ENCODE measurements at regions of chrX and their contacts with region 1.

Region 1: DNA sequence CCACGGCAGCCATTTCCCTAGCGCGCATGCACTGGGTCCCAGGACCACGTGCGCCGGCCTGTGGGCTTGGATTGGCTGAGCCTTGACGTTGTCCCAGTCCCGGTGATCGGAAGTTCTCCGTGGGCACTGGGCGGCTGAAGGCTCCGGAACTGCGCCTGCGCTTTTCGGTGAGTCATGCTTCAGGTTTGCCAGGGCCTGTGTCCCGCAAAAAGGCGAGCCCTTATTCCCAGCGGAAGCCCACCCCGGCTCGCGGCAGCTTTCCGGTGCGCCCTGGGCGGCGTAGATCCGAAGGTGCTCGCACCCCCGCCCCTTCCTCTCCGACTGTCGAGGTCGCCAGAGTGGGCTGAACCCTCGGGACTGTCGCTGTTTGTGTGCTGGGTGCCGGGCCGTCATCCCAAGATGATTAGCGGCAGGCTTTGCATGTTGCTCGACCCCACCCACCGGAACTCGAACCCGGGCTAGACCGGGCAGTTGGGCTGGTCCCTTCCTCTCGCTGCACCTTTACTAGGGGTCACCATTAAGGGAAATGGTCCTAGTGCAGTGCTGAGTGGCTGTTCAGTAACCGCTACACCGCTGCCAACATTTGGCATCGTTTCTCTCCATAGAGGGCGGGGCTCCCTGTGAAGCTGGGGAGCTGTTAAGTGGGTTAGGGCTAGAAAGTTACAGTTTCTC is at the start of gene TCEANC:
- DNase-seq: peak; percentile 96
- ATAC-seq: peak; percentile 96
- H3K4me3 Mint-ChIP-seq: peak within 1 kb of the TSS; percentile 81
- H3K27ac Mint-ChIP-seq: peak within 1 kb of the TSS; percentile 90
- H3K4me1 Mint-ChIP-seq: peaks cover 12% of the 10 kb centered on the region
- H3K27me3 Mint-ChIP-seq: no peaks in the 10 kb centered on the region
- total RNA-seq, gene TCEANC: 1.9 to 2.3 TPM

Region 2: DNA sequence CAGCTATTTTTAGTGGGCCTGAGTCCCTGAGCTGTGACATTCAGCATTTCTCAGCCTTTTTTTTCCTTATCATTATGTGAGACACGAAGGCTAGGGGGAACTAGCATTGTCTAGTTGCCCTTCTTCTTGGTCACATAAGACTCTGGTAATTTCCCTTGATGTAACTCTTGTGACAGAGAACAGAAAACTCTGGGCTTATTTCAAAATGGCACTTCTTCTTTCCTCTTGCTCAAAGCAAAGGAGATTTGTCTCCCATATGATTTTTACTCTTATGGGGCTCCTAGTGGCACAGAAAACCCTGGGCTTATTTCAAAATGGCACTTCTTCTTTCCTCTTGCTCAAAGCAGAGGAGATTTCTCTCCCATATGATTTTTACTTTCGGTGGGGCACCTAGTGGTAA is 348.1 kb before region 1 on chrX:
- CTCF ChIA-PET with region 1: no interaction called
- POLR2A ChIA-PET with region 1: no interaction called
- intact Hi-C with region 1: no loop called
- DNase-seq: no peak
- ATAC-seq: no peak
- H3K4me3 Mint-ChIP-seq: no peak overlapping the region
- H3K27ac Mint-ChIP-seq: no peak overlapping the region
- H3K4me1 Mint-ChIP-seq: peaks cover 19% of the 10 kb centered on the region
- H3K27me3 Mint-ChIP-seq: no peaks in the 10 kb centered on the region

Region 3: DNA sequence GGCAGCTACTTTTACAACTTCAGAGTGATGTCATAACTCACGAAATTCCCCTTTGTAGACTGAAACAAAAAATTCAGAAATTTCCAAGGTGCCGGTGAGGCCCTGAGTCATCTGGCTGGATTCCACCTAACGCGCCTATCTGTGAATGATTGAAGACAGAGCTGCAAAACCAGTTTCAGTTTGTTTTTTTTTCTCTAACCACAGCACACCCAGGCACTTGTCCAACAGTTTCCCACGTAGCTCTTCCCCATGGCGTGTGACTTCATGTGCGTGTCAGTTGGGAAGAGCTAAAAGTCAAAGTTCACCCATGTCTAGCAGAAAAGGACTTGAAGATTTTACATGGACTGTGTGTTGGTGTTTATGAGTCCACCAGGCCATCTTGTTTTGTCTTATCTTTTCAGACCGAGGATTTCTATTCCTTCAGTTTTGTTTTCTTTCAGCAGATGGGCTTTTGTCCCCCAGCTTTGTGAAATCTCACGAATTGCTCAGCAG is 16.1 kb after region 1 on chrX:
- CTCF ChIA-PET with region 1: no interaction called
- POLR2A ChIA-PET with region 1: interaction called, 4 read pairs
- intact Hi-C with region 1: loop called in 1 of 2 experiments (anchors 1 kb)
- DNase-seq: peak; percentile 76
- ATAC-seq: peak; percentile 93
- H3K4me3 Mint-ChIP-seq: peak overlapping the region; percentile 51
- H3K27ac Mint-ChIP-seq: peak overlapping the region; percentile 93
- H3K4me1 Mint-ChIP-seq: peaks cover 11% of the 10 kb centered on the region
- H3K27me3 Mint-ChIP-seq: no peaks in the 10 kb centered on the region

Region 4: GRCh38 chrX:13688958-13689740 is 36.0 kb after region 1 on chrX and contains the start of gene RAB9A:
- CTCF ChIA-PET with region 1: no interaction called
- POLR2A ChIA-PET with region 1: interaction called, 3 read pairs
- intact Hi-C with region 1: loop called (anchors 1 to 2 kb)
- DNase-seq: peak; percentile 88
- ATAC-seq: peak; percentile 85
- H3K4me3 Mint-ChIP-seq: peak within 1 kb of the TSS; percentile 85
- H3K27ac Mint-ChIP-seq: peak within 1 kb of the TSS; percentile 97
- H3K4me1 Mint-ChIP-seq: peaks cover 63% of the 10 kb centered on the region
- H3K27me3 Mint-ChIP-seq: no peaks in the 10 kb centered on the region
- total RNA-seq, gene RAB9A: 24.9 to 31.4 TPM

Region 5: GRCh38 chrX:13734278-13735172 is 81.4 kb after region 1 on chrX and contains the starts of genes OFD1 and TRAPPC2:
- CTCF ChIA-PET with region 1: no interaction called
- POLR2A ChIA-PET with region 1: no interaction called
- intact Hi-C with region 1: loop called (anchors 1 kb)
- DNase-seq: peak; percentile 93
- ATAC-seq: peak; percentile 95
- H3K4me3 Mint-ChIP-seq: peak within 1 kb of the TSS; percentile 81
- H3K27ac Mint-ChIP-seq: peak within 1 kb of the TSS; percentile 93
- H3K4me1 Mint-ChIP-seq: peaks cover 42% of the 10 kb centered on the region
- H3K27me3 Mint-ChIP-seq: no peaks in the 10 kb centered on the region
- total RNA-seq, gene OFD1: 28.0 to 32.4 TPM
- total RNA-seq, gene TRAPPC2: 10.3 to 16.4 TPM

Region 6: DNA sequence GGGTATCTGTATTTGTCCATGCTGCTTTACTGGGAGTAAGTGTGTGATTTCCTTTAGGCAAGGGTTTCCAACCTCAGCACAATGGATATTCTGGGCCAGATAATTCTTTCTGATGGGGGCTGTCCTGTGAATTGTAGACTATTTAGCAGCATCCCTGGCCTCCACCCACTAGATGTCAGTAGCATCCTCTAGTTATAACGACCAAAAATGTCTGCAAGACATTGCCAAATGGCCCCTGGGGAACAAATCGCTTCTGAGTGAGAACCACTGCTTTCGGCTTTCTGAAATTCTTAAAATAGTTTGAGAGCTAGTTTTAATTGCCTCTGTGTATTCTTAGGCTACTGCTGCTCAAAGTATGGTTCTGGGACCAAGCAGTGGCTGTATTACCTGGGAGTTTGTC is 244.9 kb after region 1 on chrX:
- CTCF ChIA-PET with region 1: no interaction called
- POLR2A ChIA-PET with region 1: no interaction called
- intact Hi-C with region 1: loop called in 1 of 2 experiments (anchors 10 kb)
- DNase-seq: peak; percentile 25
- ATAC-seq: peak; percentile 52
- H3K4me3 Mint-ChIP-seq: no peak overlapping the region
- H3K27ac Mint-ChIP-seq: no peak overlapping the region
- H3K4me1 Mint-ChIP-seq: peaks cover 9% of the 10 kb centered on the region
- H3K27me3 Mint-ChIP-seq: no peaks in the 10 kb centered on the region

Region 7: DNA sequence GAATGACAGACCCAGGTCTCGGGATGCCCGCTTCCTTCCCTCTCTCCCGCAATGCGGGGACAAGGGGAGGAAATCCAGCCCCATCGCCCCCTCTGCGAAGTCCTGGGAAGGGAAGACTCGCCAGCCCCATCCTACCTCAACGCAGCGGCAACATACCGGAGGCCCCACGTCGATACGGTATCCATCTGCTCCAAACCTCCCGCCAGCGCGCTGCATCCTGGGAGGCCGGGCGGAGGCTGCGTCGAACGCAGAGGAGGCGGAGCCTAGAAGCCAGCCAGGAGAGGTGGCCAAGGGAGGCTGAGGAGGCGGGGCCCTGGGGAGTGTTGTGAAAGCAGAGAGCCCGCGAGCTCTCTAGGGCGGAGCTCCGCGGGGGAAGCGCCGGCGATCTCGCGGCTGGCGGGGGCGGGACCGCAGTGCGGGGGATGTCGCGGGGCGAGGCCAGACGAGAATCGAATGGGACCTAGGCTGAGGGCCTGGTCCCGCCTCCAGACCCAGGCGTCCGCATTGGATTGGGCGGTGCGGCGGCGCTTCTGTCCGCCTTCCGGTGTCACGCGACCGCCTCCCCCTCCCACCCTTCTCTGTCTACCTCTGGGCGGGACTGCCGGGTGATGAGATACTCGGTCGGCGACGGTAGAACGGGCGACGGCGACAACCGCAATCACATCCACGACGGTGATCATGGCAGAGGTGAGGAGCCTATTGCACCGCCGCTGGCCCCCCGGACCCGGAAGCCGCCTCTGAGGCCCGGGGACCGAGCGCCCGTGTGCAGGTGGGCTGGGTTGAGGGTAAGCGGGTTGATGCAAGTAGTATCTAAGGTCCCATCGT is 1219.9 kb after region 1 on chrX and contains the starts of genes FANCB and MOSPD2:
- CTCF ChIA-PET with region 1: no interaction called
- POLR2A ChIA-PET with region 1: no interaction called
- intact Hi-C with region 1: loop called in 1 of 2 experiments (anchors 5 kb)
- DNase-seq: peak; percentile 95
- ATAC-seq: peak; percentile 96
- H3K4me3 Mint-ChIP-seq: peak within 1 kb of the TSS; percentile 78
- H3K27ac Mint-ChIP-seq: peak within 1 kb of the TSS; percentile 76
- H3K4me1 Mint-ChIP-seq: peaks cover 17% of the 10 kb centered on the region
- H3K27me3 Mint-ChIP-seq: no peaks in the 10 kb centered on the region
- total RNA-seq, gene FANCB: 14.7 to 15.4 TPM
- total RNA-seq, gene MOSPD2: 18.9 to 24.5 TPM

Region 8: GRCh38 chrX:15335135-15336022 is 1682.2 kb after region 1 on chrX and contains the start of gene PIGA:
- CTCF ChIA-PET with region 1: no interaction called
- POLR2A ChIA-PET with region 1: no interaction called
- intact Hi-C with region 1: loop called in 1 of 2 experiments (anchors 10 kb)
- DNase-seq: peak; percentile 94
- ATAC-seq: peak; percentile 97
- H3K4me3 Mint-ChIP-seq: peak within 1 kb of the TSS; percentile 84
- H3K27ac Mint-ChIP-seq: peak within 1 kb of the TSS; percentile 91
- H3K4me1 Mint-ChIP-seq: peaks cover 14% of the 10 kb centered on the region
- H3K27me3 Mint-ChIP-seq: peaks cover 4% of the 10 kb centered on the region
- total RNA-seq, gene PIGA: 37.2 to 37.9 TPM

Measured in activated CD4-positive, alpha-beta T cell treated with anti-CD3 and anti-CD28 coated beads for 36 hours (primary cell).